ENCODE measurements at regions of chr20 and their contacts with region 1.

Region 1: DNA sequence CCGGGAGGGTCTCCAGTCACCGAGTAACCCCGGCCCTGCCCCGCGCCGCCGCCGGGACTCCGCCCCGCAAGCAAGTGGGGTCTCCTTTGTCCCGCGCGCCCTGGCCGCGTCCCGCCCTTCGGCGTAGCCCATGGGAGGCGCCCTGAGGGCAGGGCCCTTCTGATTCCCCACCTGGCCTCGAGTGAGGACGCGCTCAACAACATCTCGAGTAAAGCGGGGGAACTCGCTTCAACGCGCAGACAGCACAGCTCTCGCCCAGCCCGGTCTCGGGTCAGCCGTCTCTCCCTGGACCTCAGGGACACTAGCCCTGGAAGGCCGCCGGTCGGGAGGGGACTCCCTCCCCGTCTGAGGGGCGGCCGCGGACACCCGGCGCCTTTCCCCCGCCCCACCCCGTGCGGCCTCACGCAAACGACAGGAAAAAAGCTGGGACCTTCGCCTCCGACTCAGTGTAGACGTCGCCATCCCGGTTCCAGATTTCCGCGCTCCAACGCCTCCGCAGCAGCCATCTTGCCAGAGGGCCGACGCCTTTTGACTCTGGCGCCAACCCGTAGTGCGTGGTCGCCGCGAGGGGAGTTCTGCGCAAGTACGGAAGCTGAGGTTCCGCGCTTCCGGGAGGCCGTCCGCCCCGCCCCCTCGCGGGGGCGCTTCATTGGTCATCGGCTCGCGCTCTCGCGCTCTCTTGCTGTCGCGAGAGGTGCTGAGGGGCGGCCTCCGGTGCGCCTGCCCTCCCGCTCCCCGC is 412 bp upstream of the GID8 start:
- DNase-seq: peak; percentile 92 to 97 (median 93)
- ATAC-seq: peak; percentile 91
- H3K4me3 ChIP-seq: peak overlapping the region; percentile 97
- H3K27ac ChIP-seq: peak overlapping the region; percentile 97
- H3K4me1 ChIP-seq: peaks cover 31 to 56% of the 10 kb centered on the region in 2 experiments; a peak in 4 of 5 replicates
- H3K27me3 ChIP-seq: no peaks in the 10 kb centered on the region
- CTCF ChIP-seq: no peak
- EP300 ChIP-seq: no peak
- POLR2A ChIP-seq: peak; percentile 94
- RAD21 ChIP-seq: no peak

Region 2: GRCh38 chr20:62875419-62876361 is 61.8 kb before region 1 on chr20:
- CTCF ChIA-PET with region 1: no interaction called
- POLR2A ChIA-PET with region 1: interaction called, 11 read pairs
- in situ Hi-C with region 1: no loop called
- intact Hi-C with region 1: no loop called
- DNase-seq: peak; percentile 75 to 91 (median 83)
- ATAC-seq: peak; percentile 97
- H3K4me3 ChIP-seq: peak overlapping the region; percentile 21; the same call in 1 of the 2 replicates
- H3K27ac ChIP-seq: peak overlapping the region; percentile 84
- H3K4me1 ChIP-seq: peaks cover 24 to 59% of the 10 kb centered on the region in 2 experiments
- H3K27me3 ChIP-seq: no peaks in the 10 kb centered on the region
- CTCF ChIP-seq: peak; percentile 84 to 95 (median 94)
- EP300 ChIP-seq: peak; percentile 10; the same call in 1 of the 2 replicates
- POLR2A ChIP-seq: no peak
- RAD21 ChIP-seq: peak; percentile 12 to 57; a peak in 3 of 4 replicates

Region 3: GRCh38 chr20:62900052-62900691 is 37.4 kb before region 1 on chr20:
- CTCF ChIA-PET with region 1: no interaction called
- POLR2A ChIA-PET with region 1: interaction called, 21 read pairs
- in situ Hi-C with region 1: no loop called
- intact Hi-C with region 1: no loop called
- DNase-seq: peak; percentile 78 to 91 (median 84)
- ATAC-seq: peak; percentile 98
- H3K4me3 ChIP-seq: no peak overlapping the region
- H3K27ac ChIP-seq: peak overlapping the region; percentile 46; the same call in 1 of the 3 replicates
- H3K4me1 ChIP-seq: peaks cover 6 to 10% of the 10 kb centered on the region in 2 experiments
- H3K27me3 ChIP-seq: no peaks in the 10 kb centered on the region
- CTCF ChIP-seq: peak; percentile 92 to 93 (median 93)
- EP300 ChIP-seq: 0 out of 2 replicates have a peak, but pooled peaks have one; percentile 22
- POLR2A ChIP-seq: peak; percentile 69
- RAD21 ChIP-seq: peak; percentile 48 to 74

Region 4: DNA sequence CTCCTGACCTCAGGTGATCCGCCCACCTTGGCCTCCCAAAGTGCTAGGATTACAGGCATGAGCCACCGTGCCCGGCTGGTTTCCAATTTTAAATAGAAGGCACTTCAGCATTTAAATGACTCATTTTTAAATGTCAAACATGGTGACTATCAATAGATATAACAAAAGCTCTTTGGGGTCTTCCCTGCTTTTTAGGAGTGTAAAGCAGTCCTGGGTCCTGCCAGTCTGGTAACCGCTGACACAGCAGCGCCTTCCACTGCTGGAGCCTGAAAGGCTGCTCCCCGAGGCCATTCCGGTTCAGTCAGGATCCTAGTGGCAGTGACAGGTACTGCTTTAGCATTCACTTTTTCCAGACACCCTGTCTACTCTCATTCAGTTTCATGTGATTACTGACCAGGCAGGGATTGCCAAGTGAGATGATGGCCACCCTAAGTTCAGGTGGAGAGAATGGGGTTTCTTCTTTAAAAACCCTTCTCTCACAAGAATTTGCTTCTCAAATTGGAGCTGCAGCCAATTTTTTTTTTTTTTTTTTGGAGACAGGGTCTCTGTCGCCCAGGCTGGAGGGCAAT is 16.3 kb before region 1 on chr20:
- CTCF ChIA-PET with region 1: no interaction called
- POLR2A ChIA-PET with region 1: interaction called, 64 read pairs
- in situ Hi-C with region 1: no loop called
- intact Hi-C with region 1: loop called (anchors 1 kb)
- DNase-seq: peak; percentile 43 to 79 (median 56)
- ATAC-seq: peak; percentile 85
- H3K4me3 ChIP-seq: no peak overlapping the region
- H3K27ac ChIP-seq: no peak overlapping the region
- H3K4me1 ChIP-seq: peaks cover 35 to 49% of the 10 kb centered on the region in 2 experiments; a peak in 4 of 5 replicates
- H3K27me3 ChIP-seq: no peaks in the 10 kb centered on the region
- CTCF ChIP-seq: peak; percentile 81 to 97 (median 84)
- EP300 ChIP-seq: no peak
- POLR2A ChIP-seq: no peak
- RAD21 ChIP-seq: peak in 1 of 2 experiments; percentile 41; a peak in 1 of 4 replicates

Region 5: DNA sequence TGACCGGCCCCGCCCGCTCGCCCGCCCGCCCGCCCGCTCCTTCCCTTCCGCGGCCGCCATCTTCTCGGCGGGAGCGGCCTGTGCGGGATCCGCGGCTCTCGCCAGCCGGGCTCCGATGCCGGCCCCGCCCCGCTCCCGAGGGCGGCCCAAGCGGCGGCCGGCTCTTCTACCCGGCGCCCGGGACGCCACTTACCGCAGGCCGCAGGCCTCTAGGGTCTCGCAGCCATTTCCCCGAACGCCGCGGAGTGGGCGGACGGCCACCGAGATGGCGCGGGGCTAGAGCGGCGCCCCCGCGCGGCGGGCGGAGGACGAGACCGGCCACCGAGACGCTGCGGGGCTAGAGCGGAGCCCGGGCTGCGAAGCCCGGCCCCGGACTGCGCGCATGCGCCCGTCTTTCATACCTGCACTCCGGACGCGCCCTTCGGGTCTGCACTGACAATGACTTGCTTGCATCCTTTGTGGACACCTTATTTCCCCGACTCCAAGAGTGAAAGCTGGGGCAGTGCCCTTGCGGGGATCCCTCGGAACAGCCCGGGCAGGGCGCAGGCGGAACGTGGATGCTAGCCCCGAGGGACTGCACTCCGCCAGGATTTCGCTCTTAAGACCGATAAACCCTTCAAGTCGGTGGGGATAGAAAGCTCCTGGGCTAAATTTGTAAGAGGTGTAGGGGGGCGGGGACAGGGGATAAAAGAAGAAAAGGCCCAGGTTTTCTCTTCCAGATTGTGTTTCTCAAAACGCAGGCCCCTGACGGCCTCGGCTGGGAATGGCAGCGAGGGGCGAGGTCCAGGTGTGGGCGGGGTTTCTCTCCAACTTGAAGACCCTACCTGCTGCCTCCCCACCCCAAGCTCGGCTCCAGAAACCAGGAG is 11.1 kb before region 1 on chr20 and contains the start of gene DIDO1:
- CTCF ChIA-PET with region 1: no interaction called
- POLR2A ChIA-PET with region 1: interaction called, 64 read pairs
- in situ Hi-C with region 1: no loop called
- intact Hi-C with region 1: loop called (anchors 1 kb)
- DNase-seq: peak; percentile 90 to 97 (median 92)
- ATAC-seq: peak; percentile 87
- H3K4me3 ChIP-seq: peak within 1 kb of the TSS; percentile 70
- H3K27ac ChIP-seq: peak within 1 kb of the TSS; percentile 88
- H3K4me1 ChIP-seq: peaks cover 43 to 44% of the 10 kb centered on the region in 2 experiments; a peak in 4 of 5 replicates
- H3K27me3 ChIP-seq: no peaks in the 10 kb centered on the region
- CTCF ChIP-seq: peak; percentile 50 to 55 (median 54)
- EP300 ChIP-seq: no peak
- POLR2A ChIP-seq: peak; percentile 75
- RAD21 ChIP-seq: no peak
- polyA plus RNA-seq, gene DIDO1: 4.4 to 4.8 TPM

Region 6: DNA sequence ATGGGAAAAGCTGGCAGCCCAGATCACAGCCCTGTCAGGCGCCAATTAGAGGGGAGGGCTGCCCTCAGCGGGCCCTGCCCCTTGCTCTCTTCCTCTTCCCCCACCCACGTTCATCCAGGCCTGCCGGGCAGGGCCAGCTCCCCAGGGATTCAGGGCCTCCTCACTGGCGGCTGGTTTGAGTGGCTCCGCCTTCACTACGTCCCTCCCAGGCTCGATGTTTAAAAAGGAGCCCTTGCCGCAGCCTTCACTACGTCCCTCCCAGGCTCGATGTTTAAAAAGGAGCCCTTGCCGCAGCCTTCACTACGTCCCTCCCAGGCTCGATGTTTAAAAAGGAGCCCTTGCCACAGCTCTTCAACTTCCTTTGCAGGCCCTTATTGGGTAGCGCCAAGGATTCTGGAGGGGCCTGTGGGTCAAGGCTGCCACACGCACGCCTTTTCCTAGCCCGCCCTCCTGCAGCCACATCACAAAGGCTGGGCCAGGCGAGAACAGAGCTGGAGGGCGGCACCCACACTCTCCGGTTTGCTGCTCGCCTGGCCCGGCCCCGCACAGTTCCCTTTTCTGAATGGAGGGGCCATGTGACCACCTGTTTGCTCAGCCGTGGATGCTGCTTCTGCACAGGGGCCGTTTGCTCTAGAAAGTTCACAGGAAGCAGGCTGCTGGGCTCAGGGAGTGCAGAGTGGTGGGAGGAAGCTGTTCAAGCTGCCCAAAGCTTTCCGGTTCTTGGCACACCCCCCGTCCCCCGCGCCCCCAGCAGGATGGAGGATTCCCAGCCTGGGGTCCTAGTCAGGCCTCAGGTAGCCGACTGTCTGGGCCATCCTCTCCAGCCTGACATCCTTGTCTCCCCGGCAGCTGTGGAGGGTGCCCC is 16.5 kb after region 1 on chr20:
- CTCF ChIA-PET with region 1: no interaction called
- POLR2A ChIA-PET with region 1: interaction called, 41 read pairs
- in situ Hi-C with region 1: no loop called
- intact Hi-C with region 1: no loop called
- DNase-seq: peak in 2 of 4 experiments; percentile 48 to 50
- ATAC-seq: peak; percentile 73
- H3K4me3 ChIP-seq: no peak overlapping the region
- H3K27ac ChIP-seq: no peak overlapping the region
- H3K4me1 ChIP-seq: peaks cover 3 to 40% of the 10 kb centered on the region in 2 experiments; a peak in 3 of 5 replicates
- H3K27me3 ChIP-seq: peaks cover 13 to 37% of the 10 kb centered on the region in 2 experiments; a peak in 4 of 5 replicates
- CTCF ChIP-seq: no peak
- EP300 ChIP-seq: no peak
- POLR2A ChIP-seq: no peak
- RAD21 ChIP-seq: no peak

Measured in K562 (cell line).